HCT116 (cell line): ENCODE measurements at regions of chr11 and their contacts with region 1.

Region 1: GRCh38 chr11:133821776-133822175 is 23.5 kb downstream of the SPATA19 start:
- DNase-seq: peak; percentile 27
- ATAC-seq: peak; percentile 92
- H3K4me3 ChIP-seq: no peak overlapping the region
- H3K27ac ChIP-seq: no peak overlapping the region
- H3K4me1 ChIP-seq: no peaks in the 10 kb centered on the region
- H3K27me3 ChIP-seq: peaks cover 8% of the 10 kb centered on the region; the same call in 1 of the 2 replicates
- CTCF ChIP-seq: peak; percentile 28 to 85 (median 78); a peak in 5 of 6 replicates
- POLR2A ChIP-seq: no peak
- RAD21 ChIP-seq: peak; percentile 70

Region 2: GRCh38 chr11:132024587-132025295 is 1797.0 kb before region 1 on chr11:
- CTCF ChIA-PET with region 1: no interaction called
- POLR2A ChIA-PET with region 1: no interaction called
- RAD21 ChIA-PET with region 1: no interaction called
- intact Hi-C with region 1: no loop called
- DNase-seq: no peak
- ATAC-seq: no peak
- H3K4me3 ChIP-seq: no peak overlapping the region
- H3K27ac ChIP-seq: no peak overlapping the region
- H3K4me1 ChIP-seq: no peaks in the 10 kb centered on the region
- H3K27me3 ChIP-seq: no peaks in the 10 kb centered on the region
- CTCF ChIP-seq: no peak
- POLR2A ChIP-seq: no peak
- RAD21 ChIP-seq: no peak

Region 3: DNA sequence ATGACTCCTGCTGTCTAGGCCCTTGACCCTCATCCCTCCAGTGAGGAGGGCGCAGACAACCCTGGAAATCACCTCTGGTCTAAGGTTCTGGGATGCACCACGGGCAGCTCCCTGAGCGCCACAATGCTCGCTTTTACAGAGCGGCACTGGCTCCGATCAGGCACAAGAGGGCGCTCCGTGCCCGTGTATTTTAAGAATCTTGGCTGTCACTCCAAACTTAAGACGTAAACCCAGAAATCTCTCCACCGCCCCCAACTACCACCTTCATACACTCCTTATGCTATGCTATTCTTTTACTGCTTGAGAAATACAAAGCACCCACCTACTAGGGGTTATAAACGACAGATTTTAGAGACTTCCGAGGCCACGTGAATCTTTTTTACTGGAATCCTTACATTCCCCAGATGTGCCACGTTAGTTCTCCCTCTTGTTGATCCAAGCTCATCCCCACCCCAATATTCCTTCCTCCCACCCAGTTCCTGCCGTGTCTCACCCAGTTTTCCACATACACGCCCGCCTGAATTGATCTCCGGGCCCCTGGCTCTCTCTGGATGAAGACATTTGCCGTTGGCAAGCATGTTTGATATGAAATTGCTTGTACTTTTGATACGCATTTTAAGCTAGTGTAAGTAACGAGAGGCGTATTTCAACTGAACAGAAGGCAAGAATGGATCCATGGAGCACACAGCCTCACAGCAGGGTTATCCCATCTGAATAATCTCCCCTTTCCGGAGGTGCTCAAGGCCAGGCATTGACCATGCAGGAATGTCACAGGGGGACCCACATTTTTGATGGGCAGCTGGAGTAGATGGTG is 743.0 kb before region 1 on chr11:
- CTCF ChIA-PET with region 1: interaction called, 3 read pairs
- POLR2A ChIA-PET with region 1: no interaction called
- RAD21 ChIA-PET with region 1: no interaction called
- intact Hi-C with region 1: loop called (anchors 5 kb)
- DNase-seq: no peak
- ATAC-seq: peak; percentile 67
- H3K4me3 ChIP-seq: no peak overlapping the region
- H3K27ac ChIP-seq: no peak overlapping the region
- H3K4me1 ChIP-seq: no peaks in the 10 kb centered on the region
- H3K27me3 ChIP-seq: no peaks in the 10 kb centered on the region
- CTCF ChIP-seq: peak; percentile 16 to 58 (median 56); a peak in 4 of 6 replicates
- POLR2A ChIP-seq: no peak
- RAD21 ChIP-seq: peak; percentile 60

Region 4: DNA sequence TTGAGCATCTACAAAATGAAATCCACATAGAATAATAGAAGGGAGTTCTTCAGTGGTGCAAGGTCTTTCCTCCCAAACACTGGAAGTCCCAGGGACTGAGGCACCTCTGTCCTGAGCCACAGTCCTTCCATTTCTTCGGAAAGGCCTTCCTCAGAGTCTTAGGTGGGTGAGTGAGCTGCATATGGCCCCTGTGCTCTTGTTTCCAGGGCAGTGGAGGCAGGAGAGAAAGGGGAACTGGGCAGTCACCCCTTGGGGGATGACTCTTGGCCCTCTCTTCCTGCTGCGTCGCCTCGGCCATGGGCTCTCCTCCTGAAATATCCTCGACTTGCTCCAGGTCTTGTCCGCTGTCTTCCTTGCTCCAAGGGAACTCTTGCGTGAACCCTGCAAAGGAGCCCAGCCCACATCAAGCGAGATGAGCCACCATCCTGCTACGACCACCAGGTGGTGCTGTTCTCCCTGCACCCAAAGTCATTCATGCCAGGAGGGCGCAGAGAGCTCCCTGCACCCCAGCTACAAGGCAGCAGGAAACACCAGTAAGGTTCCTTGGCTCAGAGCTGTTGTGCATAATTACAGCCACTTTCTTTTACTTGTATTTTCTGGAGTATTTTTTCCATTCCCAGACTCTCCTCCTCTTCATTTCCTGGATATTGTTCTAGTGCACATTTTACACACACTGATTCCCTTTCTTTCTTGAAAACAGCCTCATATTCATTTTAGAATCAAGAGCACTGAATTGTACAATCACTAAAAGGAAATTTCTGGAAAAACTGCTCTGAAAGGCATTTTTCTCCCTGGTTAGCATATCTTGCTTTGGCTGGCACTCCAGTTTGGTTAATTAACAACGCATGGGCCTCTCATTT is 687.2 kb before region 1 on chr11:
- CTCF ChIA-PET with region 1: interaction called, 11 read pairs
- POLR2A ChIA-PET with region 1: no interaction called
- RAD21 ChIA-PET with region 1: no interaction called
- intact Hi-C with region 1: loop called (anchors 1 kb)
- DNase-seq: no peak
- ATAC-seq: peak; percentile 61; the same call in 1 of the 2 replicates
- H3K4me3 ChIP-seq: no peak overlapping the region
- H3K27ac ChIP-seq: no peak overlapping the region
- H3K4me1 ChIP-seq: no peaks in the 10 kb centered on the region
- H3K27me3 ChIP-seq: no peaks in the 10 kb centered on the region
- CTCF ChIP-seq: peak; percentile 13 to 67 (median 56); a peak in 4 of 6 replicates
- POLR2A ChIP-seq: no peak
- RAD21 ChIP-seq: peak; percentile 32